ENCODE measurements at regions of chr11 and their contacts with region 1.

Region 1: GRCh38 chr11:64553551-64554201 is 37.3 kb upstream of the SLC22A12 start:
- DNase-seq: peak; percentile 27 to 71 (median 46)
- ATAC-seq: peak; percentile 48
- H3K4me3 ChIP-seq: no peak overlapping the region
- H3K4me3 Mint-ChIP-seq: no peak overlapping the region
- H3K27ac ChIP-seq: no peak overlapping the region
- H3K27ac Mint-ChIP-seq: no peak overlapping the region
- H3K4me1 ChIP-seq: no peaks in the 10 kb centered on the region
- H3K4me1 Mint-ChIP-seq: no peaks in the 10 kb centered on the region
- H3K27me3 ChIP-seq: no peaks in the 10 kb centered on the region
- H3K27me3 Mint-ChIP-seq: no peaks in the 10 kb centered on the region
- CTCF ChIP-seq: peak; percentile 93

Region 2: GRCh38 chr11:64644647-64645275 is 91.1 kb after region 1 on chr11:
- CTCF ChIA-PET with region 1: no interaction called
- POLR2A ChIA-PET with region 1: no interaction called
- intact Hi-C with region 1: no loop called
- DNase-seq: no peak
- ATAC-seq: no peak
- H3K4me3 ChIP-seq: no peak overlapping the region
- H3K4me3 Mint-ChIP-seq: no peak overlapping the region
- H3K27ac ChIP-seq: no peak overlapping the region
- H3K27ac Mint-ChIP-seq: no peak overlapping the region
- H3K4me1 ChIP-seq: peaks cover 4% of the 10 kb centered on the region
- H3K4me1 Mint-ChIP-seq: peaks cover 4% of the 10 kb centered on the region
- H3K27me3 ChIP-seq: peaks cover 38 to 65% of the 10 kb centered on the region in 2 experiments
- H3K27me3 Mint-ChIP-seq: peaks cover 44% of the 10 kb centered on the region
- CTCF ChIP-seq: no peak

Region 3: GRCh38 chr11:64723117-64723906 is 169.6 kb after region 1 on chr11 and contains the start of gene NRXN2:
- CTCF ChIA-PET with region 1: no interaction called
- POLR2A ChIA-PET with region 1: no interaction called
- intact Hi-C with region 1: loop called (anchors 1 to 5 kb)
- DNase-seq: peak; percentile 74 to 95 (median 82)
- ATAC-seq: peak; percentile 95
- H3K4me3 ChIP-seq: peak within 1 kb of the TSS; percentile 66
- H3K4me3 Mint-ChIP-seq: peak within 1 kb of the TSS; percentile 63
- H3K27ac ChIP-seq: peak within 1 kb of the TSS; percentile 48 to 61
- H3K27ac Mint-ChIP-seq: peak within 1 kb of the TSS; percentile 61
- H3K4me1 ChIP-seq: peaks cover 15% of the 10 kb centered on the region
- H3K4me1 Mint-ChIP-seq: peaks cover 16% of the 10 kb centered on the region
- H3K27me3 ChIP-seq: peaks cover 14 to 21% of the 10 kb centered on the region in 2 experiments
- H3K27me3 Mint-ChIP-seq: peaks cover 36% of the 10 kb centered on the region
- CTCF ChIP-seq: peak; percentile 98
- total RNA-seq, gene NRXN2: 0.05 to 0.31 TPM

Region 4: GRCh38 chr11:64900263-64900678 is 346.6 kb after region 1 on chr11:
- CTCF ChIA-PET with region 1: no interaction called
- POLR2A ChIA-PET with region 1: no interaction called
- intact Hi-C with region 1: no loop called
- DNase-seq: peak; percentile 44 to 92 (median 62)
- ATAC-seq: peak; percentile 89
- H3K4me3 ChIP-seq: no peak overlapping the region
- H3K4me3 Mint-ChIP-seq: peak overlapping the region; percentile 36
- H3K27ac ChIP-seq: peak overlapping the region; percentile 68 to 73
- H3K27ac Mint-ChIP-seq: peak overlapping the region; percentile 77
- H3K4me1 ChIP-seq: peaks cover 20% of the 10 kb centered on the region
- H3K4me1 Mint-ChIP-seq: peaks cover 13% of the 10 kb centered on the region
- H3K27me3 ChIP-seq: no peaks in the 10 kb centered on the region
- H3K27me3 Mint-ChIP-seq: no peaks in the 10 kb centered on the region
- CTCF ChIP-seq: no peak